Naive thymus-derived CD4-positive, alpha-beta T cell (primary cell): ENCODE measurements at regions of chr7 and their contacts with region 1.

Region 1: GRCh38 chr7:66075590-66076461 is at the start of gene ASL:
- DNase-seq: peak; percentile 71 to 96 (median 78)
- ATAC-seq: peak; percentile 99
- H3K4me3 ChIP-seq: peak within 1 kb of the TSS; percentile 83
- H3K4me3 Mint-ChIP-seq: peak within 1 kb of the TSS; percentile 80 to 96 (median 87)
- H3K27ac ChIP-seq: peak within 1 kb of the TSS; percentile 69
- H3K27ac Mint-ChIP-seq: peak within 1 kb of the TSS in 8 of 9 donors; percentile 42 to 89 (median 77)
- H3K4me1 ChIP-seq: peaks cover 6 to 7% of the 10 kb centered on the region in 2 donors
- H3K4me1 Mint-ChIP-seq: peaks cover 5 to 20% (median 19%) of the 10 kb centered on the region in 7 donors
- H3K27me3 ChIP-seq: no peaks in the 10 kb centered on the region
- H3K27me3 Mint-ChIP-seq: peaks cover 0 to 2% (median 0%) of the 10 kb centered on the region in 5 donors
- total RNA-seq, gene ASL: 11.3 to 29.7 (median 12.8) TPM

Region 2: GRCh38 chr7:66099616-66100474 is 24.0 kb after region 1 on chr7:
- CTCF ChIA-PET with region 1: no interaction called
- POLR2A ChIA-PET with region 1: no interaction called
- intact Hi-C with region 1: loop called in 1 of 2 experiments (anchors 1 kb)
- DNase-seq: peak in 7 of 9 donors; percentile 13 to 33 (median 26)
- ATAC-seq: peak; percentile 81
- H3K4me3 ChIP-seq: peak overlapping the region; percentile 65
- H3K4me3 Mint-ChIP-seq: peak overlapping the region; percentile 83 to 100 (median 92)
- H3K27ac ChIP-seq: peak overlapping the region; percentile 61
- H3K27ac Mint-ChIP-seq: peak overlapping the region; percentile 81 to 99 (median 94)
- H3K4me1 ChIP-seq: no peaks in the 10 kb centered on the region
- H3K4me1 Mint-ChIP-seq: peaks cover 10 to 15% (median 11%) of the 10 kb centered on the region in 7 donors
- H3K27me3 ChIP-seq: no peaks in the 10 kb centered on the region
- H3K27me3 Mint-ChIP-seq: no peaks in the 10 kb centered on the region